PC-9 (cell line): ENCODE measurements at regions of chr17 and their contacts with region 1.

Region 1: DNA sequence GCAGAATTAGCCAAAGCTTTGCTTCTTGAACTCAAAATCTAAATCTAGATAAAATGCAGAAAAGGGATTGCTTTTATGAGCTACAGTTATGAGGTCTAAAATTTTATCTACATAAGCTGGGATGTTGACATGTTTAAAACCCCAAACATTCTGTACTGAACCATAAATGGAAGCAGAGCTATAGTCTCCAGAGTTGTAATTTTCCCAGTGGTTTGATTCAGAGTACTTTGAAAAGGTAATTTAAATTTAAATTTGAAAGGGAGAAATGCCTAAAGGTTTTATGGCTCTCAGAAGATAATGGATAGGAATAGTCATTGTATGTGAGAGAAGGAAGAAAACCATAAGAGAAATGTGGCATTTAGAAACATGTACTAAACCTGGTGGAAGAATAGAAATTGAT is 163.2 kb downstream of the PPM1E start:
- DNase-seq: no peak
- H3K4me3 ChIP-seq: no peak overlapping the region
- H3K27ac ChIP-seq: no peak overlapping the region
- H3K4me1 ChIP-seq: peaks cover 4% of the 10 kb centered on the region
- H3K27me3 ChIP-seq: 0 out of 2 replicates have a peak, but pooled peaks cover 4% of the 10 kb centered on the region
- CTCF ChIP-seq: no peak

Region 2: GRCh38 chr17:59046192-59046591 is 127.3 kb after region 1 on chr17:
- CTCF ChIA-PET with region 1: no interaction called
- POLR2A ChIA-PET with region 1: interaction called, 16 read pairs
- intact Hi-C with region 1: no loop called
- DNase-seq: no peak
- H3K4me3 ChIP-seq: no peak overlapping the region
- H3K27ac ChIP-seq: no peak overlapping the region
- H3K4me1 ChIP-seq: no peaks in the 10 kb centered on the region
- H3K27me3 ChIP-seq: no peaks in the 10 kb centered on the region
- CTCF ChIP-seq: no peak

Region 3: GRCh38 chr17:59074494-59074893 is 155.6 kb after region 1 on chr17:
- CTCF ChIA-PET with region 1: no interaction called
- POLR2A ChIA-PET with region 1: no interaction called
- intact Hi-C with region 1: no loop called
- DNase-seq: peak in 1 of 2 experiments; percentile 78
- H3K4me3 ChIP-seq: no peak overlapping the region
- H3K27ac ChIP-seq: peak overlapping the region; percentile 48
- H3K4me1 ChIP-seq: peaks cover 13% of the 10 kb centered on the region
- H3K27me3 ChIP-seq: no peaks in the 10 kb centered on the region
- CTCF ChIP-seq: no peak